ENCODE measurements at regions of chr3 and their contacts with region 1.

Region 1: GRCh38 chr3:120742198-120742849 is at the starts of genes GTF2E1 and RABL3:
- DNase-seq: peak; percentile 99
- ATAC-seq: peak; percentile 97
- H3K4me3 ChIP-seq: peak within 1 kb of the TSS; percentile 92 to 100
- H3K27ac ChIP-seq: peak within 1 kb of the TSS; percentile 71
- H3K4me1 ChIP-seq: peaks cover 8 to 16% of the 10 kb centered on the region in 2 experiments
- H3K27me3 ChIP-seq: no peaks in the 10 kb centered on the region
- CTCF ChIP-seq: no peak
- POLR2A ChIP-seq: peak; percentile 57
- RAD21 ChIP-seq: no peak
- total RNA-seq, gene GTF2E1: 21.5 TPM
- total RNA-seq, gene RABL3: 23.8 TPM

Region 2: DNA sequence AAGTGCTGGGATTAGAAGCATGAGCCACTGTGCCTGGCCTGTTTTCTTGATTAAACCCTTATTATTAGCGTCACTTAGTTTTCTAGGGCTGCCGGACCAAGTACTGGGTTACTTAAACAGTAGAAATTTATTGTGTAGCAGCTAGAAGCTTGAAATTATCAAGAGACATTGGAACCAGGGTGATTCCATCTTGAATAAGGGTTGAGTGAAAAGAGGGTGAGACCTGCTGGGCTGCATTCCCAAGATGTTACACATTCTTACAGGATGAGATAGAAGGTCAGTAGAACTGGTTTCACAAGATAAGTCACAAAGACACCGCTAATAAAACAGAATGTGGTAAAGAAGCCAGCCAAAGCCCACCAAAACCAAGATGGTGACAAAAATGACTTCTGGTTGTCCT is 272.9 kb before region 1 on chr3:
- CTCF ChIA-PET with region 1: no interaction called
- POLR2A ChIA-PET with region 1: no interaction called
- RAD21 ChIA-PET with region 1: no interaction called
- intact Hi-C with region 1: no loop called
- DNase-seq: peak; percentile 68
- ATAC-seq: peak; percentile 84
- H3K4me3 ChIP-seq: peak overlapping the region in 1 of 2 experiments; percentile 11; a peak in 1 of 4 replicates
- H3K27ac ChIP-seq: peak overlapping the region; percentile 29; the same call in 1 of the 2 replicates
- H3K4me1 ChIP-seq: peaks cover 16 to 44% of the 10 kb centered on the region in 2 experiments
- H3K27me3 ChIP-seq: no peaks in the 10 kb centered on the region
- CTCF ChIP-seq: no peak
- POLR2A ChIP-seq: no peak
- RAD21 ChIP-seq: peak; percentile 15; the same call in 1 of the 2 replicates

Region 3: GRCh38 chr3:120596116-120596852 is 146.0 kb before region 1 on chr3 and contains the start of gene NDUFB4:
- CTCF ChIA-PET with region 1: no interaction called
- POLR2A ChIA-PET with region 1: no interaction called
- RAD21 ChIA-PET with region 1: no interaction called
- intact Hi-C with region 1: loop called (anchors 1 kb)
- DNase-seq: peak; percentile 95
- ATAC-seq: peak; percentile 98
- H3K4me3 ChIP-seq: peak within 1 kb of the TSS; percentile 69 to 97
- H3K27ac ChIP-seq: peak within 1 kb of the TSS; percentile 69
- H3K4me1 ChIP-seq: peaks cover 3 to 11% of the 10 kb centered on the region in 2 experiments; a peak in 2 of 4 replicates
- H3K27me3 ChIP-seq: no peaks in the 10 kb centered on the region
- CTCF ChIP-seq: no peak
- POLR2A ChIP-seq: peak; percentile 68
- RAD21 ChIP-seq: no peak
- total RNA-seq, gene NDUFB4: 161 TPM

Region 4: DNA sequence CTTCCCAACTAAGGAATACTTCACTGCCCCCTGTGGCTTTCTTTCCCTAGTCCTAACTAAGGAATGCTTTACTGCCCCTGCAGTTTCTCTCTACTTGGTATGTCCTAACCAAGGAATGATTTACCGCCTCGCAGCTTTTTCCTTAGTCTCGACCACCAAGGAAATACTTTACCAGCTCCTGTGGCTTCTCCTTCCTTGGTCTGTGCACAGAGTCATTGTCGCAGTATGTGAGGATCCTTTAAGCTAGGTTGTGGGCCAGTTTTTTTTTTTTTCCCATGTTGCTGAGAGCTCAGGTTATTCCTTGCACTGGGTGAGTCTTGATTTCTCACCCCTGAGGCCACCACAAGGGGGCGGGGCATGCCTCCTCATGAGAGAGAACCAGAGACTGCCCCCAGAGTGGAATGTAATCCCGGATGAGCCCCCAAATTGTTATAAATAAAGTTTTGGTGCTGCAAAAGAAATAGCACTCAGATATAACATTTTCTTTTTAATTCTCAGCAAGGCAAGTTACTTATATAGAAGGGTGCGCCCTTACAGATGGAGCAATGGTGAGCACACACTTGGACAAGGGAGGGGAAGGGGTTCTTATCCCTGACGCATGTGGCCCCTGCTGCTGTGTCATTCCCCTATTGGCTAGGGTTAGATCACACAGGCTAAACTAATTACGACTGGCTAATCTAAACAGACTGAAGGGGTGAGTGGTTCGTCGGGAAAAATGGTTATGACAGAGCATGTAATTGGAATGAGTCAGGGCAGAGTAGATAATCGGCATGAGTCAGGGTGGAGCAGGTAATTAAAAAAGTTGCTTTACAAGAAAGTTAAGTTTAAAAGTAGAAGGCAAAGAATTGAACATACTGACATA is 119.2 kb before region 1 on chr3:
- CTCF ChIA-PET with region 1: no interaction called
- POLR2A ChIA-PET with region 1: no interaction called
- RAD21 ChIA-PET with region 1: no interaction called
- intact Hi-C with region 1: loop called (anchors 2 kb)
- DNase-seq: peak; percentile 93
- ATAC-seq: peak; percentile 85
- H3K4me3 ChIP-seq: peak overlapping the region; percentile 43 to 49
- H3K27ac ChIP-seq: peak overlapping the region; percentile 46
- H3K4me1 ChIP-seq: peaks cover 13 to 29% of the 10 kb centered on the region in 2 experiments
- H3K27me3 ChIP-seq: no peaks in the 10 kb centered on the region
- CTCF ChIP-seq: peak; percentile 56 to 71 (median 70); a peak in 5 of 6 replicates
- POLR2A ChIP-seq: no peak
- RAD21 ChIP-seq: peak; percentile 79

Region 5: DNA sequence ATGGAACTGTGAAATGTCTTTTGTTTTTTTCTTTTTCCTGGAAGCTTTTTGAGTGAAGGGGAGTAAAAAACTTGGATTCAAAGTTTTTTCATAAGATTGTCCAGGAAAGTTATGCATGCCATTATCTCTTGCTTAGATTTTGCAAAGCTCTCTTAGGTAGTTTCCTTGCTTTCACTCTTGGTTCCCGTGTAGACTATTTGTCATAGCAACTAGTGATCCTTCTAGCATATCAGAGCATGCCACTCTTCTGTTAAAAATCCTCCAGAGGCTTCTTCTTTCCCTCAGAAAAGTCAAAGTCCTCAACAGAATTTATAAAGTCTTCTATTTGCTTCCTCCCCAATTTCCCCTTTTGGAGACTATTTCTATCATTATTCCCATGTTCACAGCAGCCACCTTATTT is 21.3 kb after region 1 on chr3:
- CTCF ChIA-PET with region 1: no interaction called
- POLR2A ChIA-PET with region 1: no interaction called
- RAD21 ChIA-PET with region 1: no interaction called
- intact Hi-C with region 1: no loop called
- DNase-seq: no peak
- ATAC-seq: no peak
- H3K4me3 ChIP-seq: no peak overlapping the region
- H3K27ac ChIP-seq: no peak overlapping the region
- H3K4me1 ChIP-seq: no peaks in the 10 kb centered on the region
- H3K27me3 ChIP-seq: no peaks in the 10 kb centered on the region
- CTCF ChIP-seq: no peak
- POLR2A ChIP-seq: no peak
- RAD21 ChIP-seq: no peak